ENCODE measurements at regions of chr12 and their contacts with region 1.

Region 1: GRCh38 chr12:116924558-116925453 is 14.1 kb downstream of the FBXW8 start:
- DNase-seq: peak; percentile 54
- H3K4me3 Mint-ChIP-seq: peak overlapping the region; percentile 68
- H3K27ac Mint-ChIP-seq: peak overlapping the region; percentile 54
- H3K4me1 Mint-ChIP-seq: peaks cover 61% of the 10 kb centered on the region
- H3K27me3 Mint-ChIP-seq: no peaks in the 10 kb centered on the region

Region 2: DNA sequence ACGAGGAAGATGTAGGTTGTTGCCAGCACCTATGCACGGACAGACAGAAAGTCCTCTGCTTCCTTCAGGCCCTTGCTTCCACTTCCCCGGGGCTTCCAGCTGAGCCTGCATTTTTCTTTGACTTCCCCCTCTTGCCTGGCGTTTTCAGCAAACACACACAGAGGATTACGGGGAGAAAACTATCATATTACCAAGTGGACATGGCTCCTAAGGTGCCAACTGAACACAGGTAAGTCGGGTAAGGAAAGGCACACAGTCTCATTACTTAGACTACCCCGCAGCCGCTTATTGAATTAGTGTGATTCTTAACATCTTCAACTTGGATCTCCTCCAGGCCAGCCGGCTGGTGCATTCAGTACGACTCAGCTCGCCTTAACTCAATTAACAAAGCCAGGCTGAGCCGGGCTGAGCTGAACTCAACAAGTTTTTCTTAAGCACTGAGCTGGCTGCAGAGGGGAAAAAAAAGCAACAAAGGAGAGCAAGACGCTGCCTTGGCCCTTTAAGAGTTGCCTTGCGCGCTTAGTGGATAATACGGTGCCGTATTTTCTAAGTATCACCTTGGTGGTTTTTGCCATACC is 384.8 kb before region 1 on chr12:
- intact Hi-C with region 1: loop called (anchors 5 kb)
- DNase-seq: no peak
- H3K4me3 Mint-ChIP-seq: no peak overlapping the region
- H3K27ac Mint-ChIP-seq: no peak overlapping the region
- H3K4me1 Mint-ChIP-seq: peaks cover 37% of the 10 kb centered on the region
- H3K27me3 Mint-ChIP-seq: peaks cover 7% of the 10 kb centered on the region

Region 3: GRCh38 chr12:116737774-116738700 is 186.8 kb before region 1 on chr12 and contains the starts of genes RNFT2 and SPRING1:
- intact Hi-C with region 1: loop called (anchors 1 kb)
- DNase-seq: peak; percentile 99
- H3K4me3 Mint-ChIP-seq: peak within 1 kb of the TSS; percentile 85
- H3K27ac Mint-ChIP-seq: peak within 1 kb of the TSS; percentile 85
- H3K4me1 Mint-ChIP-seq: peaks cover 13% of the 10 kb centered on the region
- H3K27me3 Mint-ChIP-seq: no peaks in the 10 kb centered on the region
- total RNA-seq, gene RNFT2: 8.0 and 11.8 TPM in 2 replicates
- total RNA-seq, gene SPRING1: 31.0 and 39.0 TPM in 2 replicates

Region 4: DNA sequence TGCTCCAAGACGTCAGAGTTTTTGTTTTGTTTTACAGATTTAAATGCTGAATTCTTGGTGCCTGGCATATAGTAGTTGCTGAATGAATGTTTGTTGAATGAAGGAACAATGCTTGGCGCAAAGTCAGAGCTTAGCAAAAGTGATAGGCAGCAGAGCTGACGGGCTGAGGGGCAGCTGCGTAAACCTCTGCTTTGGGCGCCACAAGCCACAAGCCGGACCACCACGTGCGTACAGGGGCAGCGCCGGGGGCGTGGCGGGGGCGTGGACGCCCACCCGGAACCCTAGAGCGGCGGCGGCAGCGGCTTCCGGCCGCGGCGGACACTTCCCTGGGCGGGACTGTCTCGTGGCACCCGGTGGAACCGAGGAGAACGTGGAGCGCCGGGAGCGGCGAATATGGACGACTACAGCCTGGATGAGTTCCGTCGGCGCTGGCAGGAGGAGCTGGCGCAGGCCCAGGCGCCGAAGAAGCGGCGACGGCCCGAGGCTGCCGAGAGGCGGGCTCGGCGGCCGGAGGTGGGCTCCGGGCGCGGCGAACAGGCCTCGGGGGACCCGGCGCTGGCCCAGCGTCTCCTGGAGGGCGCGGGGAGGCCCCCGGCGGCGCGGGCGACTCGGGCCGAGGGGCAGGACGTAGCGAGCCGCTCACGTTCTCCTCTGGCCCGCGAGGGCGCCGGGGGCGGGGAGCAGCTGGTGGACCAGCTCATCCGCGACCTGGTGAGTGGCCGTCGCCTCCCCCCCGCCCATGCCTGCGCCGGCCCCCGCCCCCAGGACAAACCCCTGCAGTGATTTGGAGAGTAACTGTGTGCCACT is 14.0 kb before region 1 on chr12 and contains the start of gene FBXW8:
- intact Hi-C with region 1: loop called (anchors 1 kb)
- DNase-seq: peak; percentile 62
- H3K4me3 Mint-ChIP-seq: peak within 1 kb of the TSS; percentile 95
- H3K27ac Mint-ChIP-seq: peak within 1 kb of the TSS; percentile 96
- H3K4me1 Mint-ChIP-seq: peaks cover 25% of the 10 kb centered on the region
- H3K27me3 Mint-ChIP-seq: peaks cover 19% of the 10 kb centered on the region
- total RNA-seq, gene FBXW8: 6.7 and 7.3 TPM in 2 replicates

Region 5: GRCh38 chr12:117098361-117099217 is 173.8 kb after region 1 on chr12:
- intact Hi-C with region 1: loop called (anchors 1 kb)
- DNase-seq: peak; percentile 17
- H3K4me3 Mint-ChIP-seq: peak overlapping the region; percentile 88
- H3K27ac Mint-ChIP-seq: peak overlapping the region; percentile 55
- H3K4me1 Mint-ChIP-seq: peaks cover 31% of the 10 kb centered on the region
- H3K27me3 Mint-ChIP-seq: peaks cover 19% of the 10 kb centered on the region

Region 6: GRCh38 chr12:117155278-117156060 is 230.7 kb after region 1 on chr12:
- intact Hi-C with region 1: loop called (anchors 2 kb)
- DNase-seq: peak; percentile 62
- H3K4me3 Mint-ChIP-seq: no peak overlapping the region
- H3K27ac Mint-ChIP-seq: no peak overlapping the region
- H3K4me1 Mint-ChIP-seq: peaks cover 29% of the 10 kb centered on the region
- H3K27me3 Mint-ChIP-seq: no peaks in the 10 kb centered on the region

Region 7: GRCh38 chr12:117212563-117213190 is 287.9 kb after region 1 on chr12:
- intact Hi-C with region 1: no loop called
- DNase-seq: peak; percentile 22
- H3K4me3 Mint-ChIP-seq: no peak overlapping the region
- H3K27ac Mint-ChIP-seq: no peak overlapping the region
- H3K4me1 Mint-ChIP-seq: no peaks in the 10 kb centered on the region
- H3K27me3 Mint-ChIP-seq: peaks cover 9% of the 10 kb centered on the region

Measured in activated T-helper 1 cell treated with anti-CD3 and anti-CD28 coated beads, Interleukin-12 subunit alpha, Interleukin-12 subunit beta, Interleukin-2, Interleukin-4 antibody, amounts not matched to agents 30 ng/mL and 10 ng/mL and 1 ng/mL, durations not matched to agents 14 hours and 24 hours and 36 hours (primary cell).